Astrocyte of the cerebellum (primary cell): ENCODE measurements at regions of chr1 and their contacts with region 1.

Region 1: DNA sequence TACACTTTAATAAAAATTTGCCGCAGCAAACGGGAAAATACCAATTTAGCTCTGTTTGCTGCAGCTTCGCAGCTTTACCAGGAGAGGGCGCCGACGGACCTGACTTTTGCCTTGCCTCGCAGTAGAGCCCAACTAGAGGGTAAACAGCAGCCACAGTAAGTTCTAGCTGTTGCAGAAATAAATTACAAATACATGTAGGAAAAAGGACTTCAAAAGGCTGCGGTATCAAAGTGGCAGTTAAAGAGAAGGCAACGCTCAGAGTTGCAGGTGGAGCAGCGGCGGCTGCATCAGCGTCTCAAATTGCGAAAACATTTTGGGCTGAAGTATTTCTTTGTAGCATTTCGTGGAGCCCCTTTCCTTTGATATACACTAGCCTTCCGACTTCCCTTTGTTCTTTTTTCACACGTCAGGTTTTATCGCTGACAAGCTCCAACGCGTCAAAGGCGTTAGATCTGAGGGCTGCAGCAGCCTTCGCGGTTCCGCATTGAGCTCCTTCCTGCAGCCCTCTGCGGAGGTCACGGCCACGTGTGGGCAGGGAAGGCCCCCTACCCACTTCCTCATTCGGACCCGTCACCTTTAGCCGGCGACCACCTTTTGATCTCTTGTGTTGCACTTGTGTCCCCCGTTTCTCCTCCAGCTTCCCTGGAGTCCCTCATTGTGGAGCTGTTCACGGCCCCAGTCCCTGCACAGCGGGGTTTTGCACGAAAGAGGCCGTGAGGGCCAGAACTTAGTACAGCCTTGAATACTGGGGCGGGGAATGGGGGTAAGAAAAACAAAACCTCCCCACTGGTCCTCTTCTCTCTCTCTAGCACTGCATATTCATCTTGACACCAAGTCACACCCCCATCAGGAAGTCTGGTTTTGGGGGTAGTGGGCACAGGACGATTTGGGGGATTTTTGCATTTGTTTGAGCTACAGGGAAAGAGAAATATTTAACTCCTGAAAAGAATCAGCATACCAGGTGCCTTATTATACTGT is 72.8 kb downstream of the S1PR1 start:
- DNase-seq: peak; percentile 15
- H3K4me3 ChIP-seq: peak overlapping the region; percentile 43
- CTCF ChIP-seq: peak; percentile 90

Region 2: DNA sequence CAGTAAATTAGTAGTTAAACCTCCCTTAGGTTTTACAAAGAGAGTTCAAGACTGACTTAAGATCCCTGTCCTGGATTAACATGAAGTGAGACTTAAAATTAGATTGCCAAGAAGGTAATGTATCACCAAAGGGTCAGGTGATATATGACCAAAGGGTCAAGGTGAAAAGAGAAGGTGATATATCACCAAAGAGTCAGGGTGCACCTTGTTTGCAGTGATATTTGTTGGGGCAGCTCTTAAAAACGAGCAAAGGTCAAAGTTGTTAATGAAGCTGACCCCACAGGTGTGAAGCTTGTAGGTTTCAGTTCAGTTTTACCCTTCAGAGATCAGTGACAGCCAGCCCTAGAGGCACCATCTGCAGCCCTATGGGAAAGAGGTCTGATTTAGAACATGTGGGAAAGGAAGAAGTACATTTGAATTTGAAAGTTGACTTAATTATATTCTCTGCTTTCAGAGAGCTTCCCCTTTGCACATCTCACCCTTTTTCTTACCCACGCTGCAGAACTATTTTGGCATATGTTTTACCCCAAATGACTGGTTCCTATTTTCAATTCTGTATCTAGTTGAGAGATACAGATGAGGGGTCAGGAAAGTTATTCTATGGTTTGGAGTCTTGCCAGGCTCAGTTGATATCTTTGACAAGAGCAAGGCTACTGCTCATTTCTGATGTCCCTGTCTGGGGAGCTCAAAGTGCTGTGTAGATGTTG is 98.0 kb after region 1 on chr1:
- in situ Hi-C with region 1: loop called (anchors 5 kb)
- DNase-seq: no peak
- H3K4me3 ChIP-seq: no peak overlapping the region
- CTCF ChIP-seq: no peak

Region 3: GRCh38 chr1:101438359-101438758 is 128.7 kb after region 1 on chr1:
- in situ Hi-C with region 1: no loop called
- DNase-seq: no peak
- H3K4me3 ChIP-seq: no peak overlapping the region
- CTCF ChIP-seq: no peak